Breast epithelium (tissue), 4 donors: ENCODE measurements at regions of chr5 and their contacts with region 1.

Region 1: GRCh38 chr5:159987031-159987674 is 21.8 kb upstream of the TTC1 start:
- DNase-seq: peak; percentile 69 to 87
- H3K4me3 ChIP-seq: peak overlapping the region; percentile 38 to 68 (median 42)
- H3K27ac ChIP-seq: peak overlapping the region in 1 of 2 donors; percentile 33
- H3K4me1 ChIP-seq: no peaks in the 10 kb centered on the region
- H3K27me3 ChIP-seq: peaks cover 0 to 5% of the 10 kb centered on the region in 2 donors
- CTCF ChIP-seq: peak in 2 of 3 donors; percentile 71 to 79
- POLR2A ChIP-seq: no peak

Region 2: DNA sequence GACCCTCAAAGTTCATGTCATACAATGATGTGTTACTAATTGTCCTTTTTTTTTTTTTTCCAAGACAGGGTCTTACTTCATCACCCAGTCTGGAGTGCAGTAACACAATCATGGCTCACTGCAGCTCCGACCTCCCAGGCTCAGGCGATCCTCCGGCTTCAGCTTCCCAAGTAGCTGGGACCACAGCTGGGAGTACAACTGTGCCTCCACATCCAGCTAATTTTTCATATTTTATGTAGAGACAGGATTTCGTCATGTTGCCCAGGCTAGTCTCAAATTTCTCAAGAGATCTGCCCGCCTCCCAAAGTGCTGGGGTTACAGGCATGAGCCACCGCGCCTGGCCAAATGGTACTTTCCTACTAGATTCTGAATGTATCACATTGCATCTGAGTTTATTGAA is 838.1 kb before region 1 on chr5:
- intact Hi-C with region 1: loop called (anchors 2 kb)
- DNase-seq: no peak
- H3K4me3 ChIP-seq: no peak overlapping the region
- H3K27ac ChIP-seq: no peak overlapping the region
- H3K4me1 ChIP-seq: no peaks in the 10 kb centered on the region
- H3K27me3 ChIP-seq: no peaks in the 10 kb centered on the region
- CTCF ChIP-seq: no peak
- POLR2A ChIP-seq: no peak

Region 3: DNA sequence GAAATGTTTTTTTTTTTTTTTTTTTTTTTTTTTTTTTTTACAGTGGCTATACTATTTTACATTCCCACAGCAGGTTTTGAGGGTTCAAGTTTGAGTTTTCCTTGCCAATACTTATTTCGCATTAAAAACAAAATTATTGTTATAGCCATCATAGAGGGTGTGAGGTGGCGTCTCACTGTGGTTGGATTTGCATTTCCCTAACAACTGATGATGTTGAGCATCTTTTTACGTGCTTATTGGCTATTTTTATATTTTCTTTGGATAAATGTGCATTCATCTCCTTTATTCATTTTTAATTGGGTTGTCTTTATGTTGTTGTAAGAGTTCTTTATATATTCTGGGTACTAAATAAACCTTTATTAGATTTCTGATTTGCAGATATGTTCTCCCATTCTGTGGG is 743.0 kb before region 1 on chr5:
- intact Hi-C with region 1: no loop called
- DNase-seq: no peak
- H3K4me3 ChIP-seq: no peak overlapping the region
- H3K27ac ChIP-seq: no peak overlapping the region
- H3K4me1 ChIP-seq: no peaks in the 10 kb centered on the region
- H3K27me3 ChIP-seq: peaks cover 0 to 4% of the 10 kb centered on the region in 2 donors
- CTCF ChIP-seq: no peak
- POLR2A ChIP-seq: no peak